ENCODE measurements at regions of chr2 and their contacts with region 1.

Region 1: GRCh38 chr2:170928824-170929685 is at the start of gene GORASP2:
- H3K4me3 ChIP-seq: peak within 1 kb of the TSS; percentile 94
- H3K27ac ChIP-seq: peak within 1 kb of the TSS; percentile 80
- H3K4me1 ChIP-seq: peaks cover 4% of the 10 kb centered on the region; the same call in 1 of the 2 replicates
- CTCF ChIP-seq: peak; percentile 99

Region 2: GRCh38 chr2:170940066-170940465 is 11.0 kb after region 1 on chr2:
- CTCF ChIA-PET with region 1: interaction called, 13 read pairs
- POLR2A ChIA-PET with region 1: interaction called, 5 read pairs
- H3K4me3 ChIP-seq: no peak overlapping the region
- H3K27ac ChIP-seq: no peak overlapping the region
- H3K4me1 ChIP-seq: peaks cover 4% of the 10 kb centered on the region; the same call in 1 of the 2 replicates
- CTCF ChIP-seq: no peak

Region 3: GRCh38 chr2:170950221-170950761 is 21.2 kb after region 1 on chr2:
- CTCF ChIA-PET with region 1: interaction called, 14 read pairs
- POLR2A ChIA-PET with region 1: interaction called, 3 read pairs
- H3K4me3 ChIP-seq: no peak overlapping the region
- H3K27ac ChIP-seq: no peak overlapping the region
- H3K4me1 ChIP-seq: no peaks in the 10 kb centered on the region
- CTCF ChIP-seq: no peak

Region 4: DNA sequence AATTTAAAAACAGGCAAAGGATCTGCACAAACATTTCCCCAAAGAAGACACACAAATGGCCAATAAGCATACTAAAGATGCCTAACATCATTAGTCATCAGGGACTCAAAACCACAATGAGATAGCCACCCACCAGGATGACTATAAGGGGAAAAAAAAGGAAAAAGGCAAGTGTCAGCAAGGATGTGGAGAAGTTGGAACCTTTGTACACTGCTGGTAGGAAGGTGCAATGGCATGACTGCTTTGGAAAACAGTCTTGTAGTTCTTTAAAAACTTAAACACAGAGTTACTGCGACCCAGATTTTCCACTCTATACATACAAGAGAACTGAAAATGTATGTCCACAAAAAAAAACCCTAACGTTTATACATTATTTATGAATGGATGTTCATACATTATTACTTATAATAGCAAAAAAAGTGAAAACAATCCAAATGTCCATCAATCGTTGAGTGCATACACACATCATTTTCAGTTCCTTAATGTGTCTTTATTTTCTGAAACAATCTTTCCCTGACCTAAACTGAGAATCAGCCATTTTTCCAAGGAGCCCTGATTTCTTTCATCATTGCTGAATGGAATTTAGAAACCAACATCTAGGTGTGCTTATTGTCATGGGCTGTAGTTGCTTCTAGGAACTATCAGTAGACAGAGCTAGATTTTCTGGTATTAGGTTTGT is 296.4 kb after region 1 on chr2:
- CTCF ChIA-PET with region 1: no interaction called
- POLR2A ChIA-PET with region 1: no interaction called
- H3K4me3 ChIP-seq: no peak overlapping the region
- H3K27ac ChIP-seq: no peak overlapping the region
- H3K4me1 ChIP-seq: no peaks in the 10 kb centered on the region
- CTCF ChIP-seq: no peak

Measured in HEK293 (cell line).